ENCODE measurements at regions of chr12 and their contacts with region 1.

Region 1: GRCh38 chr12:92987362-92987761 is 58.3 kb upstream of the EEA1 start:
- DNase-seq: no peak
- H3K4me3 Mint-ChIP-seq: no peak overlapping the region
- H3K27ac Mint-ChIP-seq: peak overlapping the region; percentile 60
- H3K4me1 Mint-ChIP-seq: peaks cover 38% of the 10 kb centered on the region
- H3K27me3 Mint-ChIP-seq: no peaks in the 10 kb centered on the region

Region 2: DNA sequence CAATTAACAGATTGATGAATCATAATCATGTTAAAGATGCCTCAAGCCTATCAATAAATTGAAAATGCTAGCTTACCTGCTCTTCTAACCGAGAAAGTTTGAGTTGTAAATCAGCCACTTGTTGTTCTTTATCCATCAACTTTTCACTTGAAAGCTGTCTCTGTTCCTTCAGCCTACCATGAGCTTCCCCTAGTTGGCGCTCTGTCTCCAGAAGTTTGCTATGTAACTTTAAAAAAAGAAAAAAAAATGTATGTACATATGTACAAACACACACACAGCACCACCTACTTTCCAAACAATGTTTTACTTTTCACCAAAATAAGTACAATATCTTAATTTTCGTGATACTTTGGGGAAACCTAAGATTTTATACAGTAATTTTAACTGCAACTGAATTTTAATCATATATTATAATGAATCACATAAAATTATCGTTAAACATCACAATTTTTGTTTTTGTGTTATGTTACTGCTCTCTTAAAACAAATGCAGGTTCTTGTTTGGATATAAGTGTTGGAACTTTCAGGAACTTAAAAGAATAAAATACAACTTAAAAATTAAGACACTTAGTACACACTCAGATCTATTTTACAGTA is 159.4 kb before region 1 on chr12:
- intact Hi-C with region 1: no loop called
- DNase-seq: no peak
- H3K4me3 Mint-ChIP-seq: no peak overlapping the region
- H3K27ac Mint-ChIP-seq: no peak overlapping the region
- H3K4me1 Mint-ChIP-seq: no peaks in the 10 kb centered on the region
- H3K27me3 Mint-ChIP-seq: no peaks in the 10 kb centered on the region

Region 3: DNA sequence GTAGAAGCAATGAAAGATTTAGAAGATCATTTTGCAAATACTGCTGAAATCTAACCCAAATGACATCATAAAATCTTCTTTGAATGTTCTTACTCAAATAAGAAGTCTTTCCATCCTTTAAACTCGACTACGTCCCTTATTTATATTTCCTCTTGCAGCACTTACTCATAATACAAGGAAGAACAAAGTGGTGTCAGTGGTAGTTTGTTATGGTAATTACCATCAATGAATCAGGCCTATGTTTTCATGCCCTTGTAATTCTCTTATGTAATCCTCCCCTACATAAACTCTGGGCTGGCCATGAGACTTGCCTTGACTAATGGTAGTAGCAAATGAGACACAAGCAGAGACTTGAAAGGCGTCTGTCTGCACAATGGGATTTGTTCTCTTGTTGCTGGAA is 75.3 kb before region 1 on chr12:
- intact Hi-C with region 1: loop called (anchors 1 kb)
- DNase-seq: no peak
- H3K4me3 Mint-ChIP-seq: peak overlapping the region; percentile 13
- H3K27ac Mint-ChIP-seq: peak overlapping the region; percentile 85
- H3K4me1 Mint-ChIP-seq: peaks cover 38% of the 10 kb centered on the region
- H3K27me3 Mint-ChIP-seq: no peaks in the 10 kb centered on the region

Region 4: GRCh38 chr12:92968176-92968813 is 19.1 kb before region 1 on chr12:
- intact Hi-C with region 1: no loop called
- DNase-seq: no peak
- H3K4me3 Mint-ChIP-seq: no peak overlapping the region
- H3K27ac Mint-ChIP-seq: no peak overlapping the region
- H3K4me1 Mint-ChIP-seq: no peaks in the 10 kb centered on the region
- H3K27me3 Mint-ChIP-seq: no peaks in the 10 kb centered on the region

Region 5: GRCh38 chr12:93008044-93008778 is 20.8 kb after region 1 on chr12:
- intact Hi-C with region 1: loop called (anchors 2 kb)
- DNase-seq: no peak
- H3K4me3 Mint-ChIP-seq: no peak overlapping the region
- H3K27ac Mint-ChIP-seq: no peak overlapping the region
- H3K4me1 Mint-ChIP-seq: peaks cover 14% of the 10 kb centered on the region
- H3K27me3 Mint-ChIP-seq: peaks cover 1% of the 10 kb centered on the region

Region 6: GRCh38 chr12:93060666-93061471 is 73.5 kb after region 1 on chr12:
- intact Hi-C with region 1: loop called (anchors 2 kb)
- DNase-seq: no peak
- H3K4me3 Mint-ChIP-seq: no peak overlapping the region
- H3K27ac Mint-ChIP-seq: peak overlapping the region; percentile 59
- H3K4me1 Mint-ChIP-seq: peaks cover 14% of the 10 kb centered on the region
- H3K27me3 Mint-ChIP-seq: peaks cover 23% of the 10 kb centered on the region

Region 7: GRCh38 chr12:93243689-93244513 is 256.5 kb after region 1 on chr12:
- intact Hi-C with region 1: loop called (anchors 5 kb)
- DNase-seq: no peak
- H3K4me3 Mint-ChIP-seq: no peak overlapping the region
- H3K27ac Mint-ChIP-seq: peak overlapping the region; percentile 2
- H3K4me1 Mint-ChIP-seq: peaks cover 37% of the 10 kb centered on the region
- H3K27me3 Mint-ChIP-seq: no peaks in the 10 kb centered on the region

Region 8: GRCh38 chr12:93397412-93397811 is 410.1 kb after region 1 on chr12:
- intact Hi-C with region 1: loop called (anchors 1 kb)
- DNase-seq: no peak
- H3K4me3 Mint-ChIP-seq: no peak overlapping the region
- H3K27ac Mint-ChIP-seq: no peak overlapping the region
- H3K4me1 Mint-ChIP-seq: peaks cover 3% of the 10 kb centered on the region
- H3K27me3 Mint-ChIP-seq: no peaks in the 10 kb centered on the region

Region 9: GRCh38 chr12:94101738-94102660 is 1114.6 kb after region 1 on chr12:
- intact Hi-C with region 1: loop called (anchors 2 kb)
- DNase-seq: peak; percentile 81
- H3K4me3 Mint-ChIP-seq: peak overlapping the region; percentile 77
- H3K27ac Mint-ChIP-seq: peak overlapping the region; percentile 62
- H3K4me1 Mint-ChIP-seq: peaks cover 35% of the 10 kb centered on the region
- H3K27me3 Mint-ChIP-seq: peaks cover 2% of the 10 kb centered on the region